ENCODE measurements at regions of chr2 and their contacts with region 1.

Region 1: GRCh38 chr2:217886720-217887309 is 116.0 kb downstream of the TNS1 start:
- DNase-seq: no peak
- H3K4me3 ChIP-seq: no peak overlapping the region
- H3K27me3 ChIP-seq: no peaks in the 10 kb centered on the region
- CTCF ChIP-seq: peak; percentile 81

Region 2: GRCh38 chr2:217868911-217869334 is 17.9 kb before region 1 on chr2:
- CTCF ChIA-PET with region 1: interaction called, 38 read pairs
- POLR2A ChIA-PET with region 1: no interaction called
- DNase-seq: peak; percentile 9
- H3K4me3 ChIP-seq: no peak overlapping the region
- H3K27me3 ChIP-seq: no peaks in the 10 kb centered on the region
- CTCF ChIP-seq: no peak

Region 3: DNA sequence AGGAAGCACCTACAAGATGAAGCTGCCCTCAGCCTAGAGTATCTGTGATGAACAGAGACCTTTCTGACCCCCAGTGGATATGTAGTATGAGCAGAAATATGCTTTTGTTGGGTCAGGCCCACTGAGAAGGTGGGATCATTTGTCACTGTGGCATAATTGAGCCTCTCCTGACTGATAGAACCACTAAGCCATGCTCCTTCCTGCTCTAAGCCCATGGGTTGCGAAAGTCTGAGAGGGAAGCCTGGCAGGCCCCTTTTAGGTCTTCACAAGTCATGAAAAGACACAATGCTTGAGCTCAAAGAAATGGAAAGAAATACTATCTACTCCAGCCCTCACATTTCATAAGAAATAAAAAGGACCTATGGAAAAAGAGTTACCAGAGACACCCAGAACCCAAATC is 11.7 kb before region 1 on chr2:
- CTCF ChIA-PET with region 1: interaction called, 38 read pairs
- POLR2A ChIA-PET with region 1: no interaction called
- DNase-seq: no peak
- H3K4me3 ChIP-seq: no peak overlapping the region
- H3K27me3 ChIP-seq: no peaks in the 10 kb centered on the region
- CTCF ChIP-seq: no peak

Region 4: GRCh38 chr2:217988014-217988839 is 101.4 kb after region 1 on chr2:
- CTCF ChIA-PET with region 1: interaction called, 23 read pairs
- POLR2A ChIA-PET with region 1: no interaction called
- DNase-seq: no peak
- H3K4me3 ChIP-seq: no peak overlapping the region
- H3K27me3 ChIP-seq: no peaks in the 10 kb centered on the region
- CTCF ChIP-seq: peak; percentile 87